GM10248 (cell line): ENCODE measurements at regions of chr9 and their contacts with region 1.

Region 1: GRCh38 chr9:93134015-93134739 is at the start of gene NINJ1:
- DNase-seq: peak; percentile 93
- CTCF ChIP-seq: no peak

Region 2: GRCh38 chr9:93119953-93120845 is 14.0 kb before region 1 on chr9:
- CTCF ChIA-PET with region 1: interaction called, 26 read pairs
- POLR2A ChIA-PET with region 1: interaction called, 4 read pairs
- DNase-seq: peak; percentile 87
- CTCF ChIP-seq: no peak

Region 3: DNA sequence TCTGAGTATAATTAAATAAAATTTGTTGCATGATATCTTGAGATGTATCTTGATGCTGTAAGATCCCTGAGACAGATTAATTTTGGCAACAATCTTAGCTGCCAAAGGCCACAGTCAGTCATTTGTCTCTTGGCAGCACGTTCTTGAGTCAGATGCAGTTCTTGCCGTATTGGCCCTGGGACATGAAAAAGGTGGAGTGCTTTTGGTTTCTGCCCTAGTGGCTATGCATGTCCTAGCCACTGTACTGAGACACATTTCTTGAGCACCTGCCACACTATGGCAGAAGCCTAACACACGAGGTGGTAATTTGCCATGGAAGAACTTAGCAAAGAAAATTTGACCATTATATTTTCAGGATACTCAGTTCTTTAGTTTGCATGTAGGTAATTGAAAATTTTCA is 397.2 kb after region 1 on chr9:
- CTCF ChIA-PET with region 1: no interaction called
- POLR2A ChIA-PET with region 1: no interaction called
- DNase-seq: no peak
- CTCF ChIP-seq: no peak